WTC11 (cell line): ENCODE measurements at regions of chr1 and their contacts with region 1.

Region 1: DNA sequence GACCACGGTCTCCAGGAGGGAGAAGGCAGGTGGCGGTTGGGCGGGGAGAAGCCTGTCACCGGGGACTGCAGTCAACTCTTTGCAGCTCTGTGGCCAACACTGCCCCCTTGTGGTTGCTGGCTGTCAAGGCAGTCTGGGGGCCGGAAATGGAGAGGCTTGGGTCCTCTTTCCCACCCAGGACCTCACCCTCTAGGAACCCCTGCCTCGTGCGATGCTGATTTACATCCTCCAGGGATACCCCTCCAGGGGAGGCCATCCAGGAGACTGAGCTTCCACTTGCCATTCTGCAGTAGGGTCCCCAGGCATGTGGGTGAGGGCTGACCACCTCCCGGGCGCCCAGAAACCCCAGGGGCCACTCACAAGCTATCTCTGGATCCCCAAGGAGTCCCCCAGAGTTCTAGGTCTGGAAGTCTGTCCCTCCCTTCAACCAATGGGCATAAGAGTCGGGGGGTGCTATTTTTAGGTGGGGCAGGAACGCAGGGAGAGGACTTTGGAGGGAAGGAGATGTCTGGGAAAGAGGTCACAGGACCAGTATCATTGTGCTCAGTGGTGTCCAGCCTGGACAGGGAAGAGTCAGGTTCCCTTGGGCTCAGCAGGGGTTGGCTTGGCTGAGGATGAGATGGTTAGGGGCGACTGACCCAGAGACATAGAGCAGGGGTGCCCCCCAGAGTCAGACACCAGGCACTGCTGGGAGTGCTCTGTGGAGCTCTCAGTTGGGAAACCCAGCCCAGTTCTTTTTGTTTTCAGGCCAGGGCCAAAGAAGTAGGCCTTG is 7.1 kb upstream of the GPR61 start:
- DNase-seq: peak; percentile 96
- ATAC-seq: peak; percentile 91
- H3K4me3 Mint-ChIP-seq: peak overlapping the region; percentile 38; the same call in 1 of the 2 replicates
- H3K27ac Mint-ChIP-seq: peak overlapping the region; percentile 8; the same call in 1 of the 2 replicates
- H3K4me1 Mint-ChIP-seq: peaks cover 10% of the 10 kb centered on the region
- H3K27me3 Mint-ChIP-seq: peaks cover 8% of the 10 kb centered on the region
- CTCF ChIP-seq: peak; percentile 97

Region 2: GRCh38 chr1:109248797-109249642 is 283.5 kb before region 1 on chr1 and contains the start of gene CELSR2:
- CTCF ChIA-PET with region 1: interaction called, 11 read pairs
- POLR2A ChIA-PET with region 1: no interaction called
- DNase-seq: peak; percentile 88
- ATAC-seq: peak; percentile 84
- H3K4me3 Mint-ChIP-seq: peak within 1 kb of the TSS; percentile 63
- H3K27ac Mint-ChIP-seq: no peak within 1 kb of the TSS
- H3K4me1 Mint-ChIP-seq: peaks cover 24% of the 10 kb centered on the region
- H3K27me3 Mint-ChIP-seq: peaks cover 36% of the 10 kb centered on the region
- CTCF ChIP-seq: no peak
- total RNA-seq, gene CELSR2: 26.8 to 31.3 TPM (median 28.2 TPM) in 3 replicates

Region 3: GRCh38 chr1:109282952-109283747 is 249.4 kb before region 1 on chr1 and contains the start of gene PSRC1:
- CTCF ChIA-PET with region 1: interaction called, 18 read pairs
- POLR2A ChIA-PET with region 1: no interaction called
- DNase-seq: peak; percentile 96
- ATAC-seq: peak; percentile 92
- H3K4me3 Mint-ChIP-seq: peak within 1 kb of the TSS; percentile 99
- H3K27ac Mint-ChIP-seq: peak within 1 kb of the TSS; percentile 97
- H3K4me1 Mint-ChIP-seq: peaks cover 42% of the 10 kb centered on the region
- H3K27me3 Mint-ChIP-seq: no peaks in the 10 kb centered on the region; the same call in 1 of the 2 replicates
- CTCF ChIP-seq: no peak
- total RNA-seq, gene PSRC1: 56.9 to 68.4 TPM (median 64.1 TPM) in 3 replicates

Region 4: GRCh38 chr1:109388884-109389637 is 143.5 kb before region 1 on chr1:
- CTCF ChIA-PET with region 1: no interaction called
- POLR2A ChIA-PET with region 1: no interaction called
- DNase-seq: no peak
- ATAC-seq: no peak
- H3K4me3 Mint-ChIP-seq: no peak overlapping the region
- H3K27ac Mint-ChIP-seq: no peak overlapping the region
- H3K4me1 Mint-ChIP-seq: peaks cover 32% of the 10 kb centered on the region
- H3K27me3 Mint-ChIP-seq: no peaks in the 10 kb centered on the region
- CTCF ChIP-seq: no peak

Region 5: DNA sequence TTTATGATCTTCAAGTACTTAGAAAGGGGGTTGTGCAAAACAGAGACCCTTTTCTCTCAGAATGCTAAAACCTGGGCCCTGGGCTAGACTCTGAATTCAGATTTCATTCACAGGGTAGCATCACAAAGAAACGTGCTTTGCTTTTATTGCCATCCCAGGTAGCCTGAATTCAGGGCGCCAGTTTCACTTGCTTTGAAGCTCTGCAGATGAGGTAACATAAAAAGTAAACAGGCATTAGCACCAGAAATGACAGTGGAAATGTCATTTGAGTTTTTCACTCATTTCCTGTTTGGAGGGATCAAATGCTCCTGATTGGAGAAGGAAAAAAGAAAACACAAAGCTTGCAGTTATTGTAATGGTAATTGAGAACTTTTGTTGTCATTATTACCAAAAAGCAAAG is 63.6 kb before region 1 on chr1:
- CTCF ChIA-PET with region 1: interaction called, 10 read pairs
- POLR2A ChIA-PET with region 1: no interaction called
- DNase-seq: no peak
- ATAC-seq: no peak
- H3K4me3 Mint-ChIP-seq: no peak overlapping the region
- H3K27ac Mint-ChIP-seq: no peak overlapping the region
- H3K4me1 Mint-ChIP-seq: peaks cover 25% of the 10 kb centered on the region
- H3K27me3 Mint-ChIP-seq: peaks cover 57% of the 10 kb centered on the region
- CTCF ChIP-seq: no peak

Region 6: DNA sequence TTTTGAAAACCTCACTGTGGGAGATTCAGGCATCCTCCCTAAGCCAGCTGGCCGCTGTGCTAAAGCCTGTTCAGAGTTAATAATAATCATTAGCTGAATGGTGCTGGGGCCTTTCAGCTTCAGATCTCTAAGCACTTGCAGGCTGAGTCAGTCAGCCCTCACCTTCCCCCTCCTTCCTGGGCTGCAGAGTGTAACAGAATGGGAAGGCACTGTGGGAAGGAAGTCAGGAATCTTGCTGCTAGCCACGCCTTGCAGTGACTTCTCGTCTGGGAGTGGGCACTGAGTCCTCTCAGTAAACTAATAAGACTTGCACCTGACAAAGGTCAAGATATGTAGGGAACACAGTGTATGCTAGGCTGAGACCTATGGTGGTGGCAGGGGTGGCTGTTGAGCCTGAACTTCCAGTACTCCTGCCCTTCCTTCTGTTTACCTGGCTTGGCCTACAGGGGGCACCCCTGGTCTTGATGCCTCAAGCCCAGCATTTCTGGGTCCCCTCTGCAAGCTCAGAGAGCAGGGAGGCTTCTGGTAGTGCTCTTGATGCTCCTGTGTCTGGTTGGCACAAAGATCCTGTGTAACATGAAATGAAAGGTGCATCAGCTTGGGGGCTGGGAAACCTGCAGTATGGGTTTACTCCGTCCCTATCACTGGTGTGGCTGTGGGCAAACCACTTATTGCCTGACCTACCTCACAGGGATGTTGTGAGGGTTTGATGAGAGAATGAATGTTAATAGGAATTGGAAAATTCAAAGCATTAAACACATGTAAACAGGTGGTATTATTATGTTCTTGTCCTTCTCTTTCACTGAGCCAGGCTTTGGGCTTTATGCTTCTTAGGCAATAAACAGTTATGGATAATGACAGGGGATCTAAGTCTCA is 32.7 kb before region 1 on chr1:
- CTCF ChIA-PET with region 1: interaction called, 740 read pairs
- POLR2A ChIA-PET with region 1: interaction called, 3 read pairs
- DNase-seq: peak; percentile 89
- ATAC-seq: peak; percentile 77
- H3K4me3 Mint-ChIP-seq: no peak overlapping the region
- H3K27ac Mint-ChIP-seq: 0 out of 2 replicates have a peak overlapping the region, but pooled peaks have one; percentile 23
- H3K4me1 Mint-ChIP-seq: peaks cover 28% of the 10 kb centered on the region
- H3K27me3 Mint-ChIP-seq: no peaks in the 10 kb centered on the region
- CTCF ChIP-seq: peak; percentile 40; the same call in 1 of the 2 replicates

Region 7: DNA sequence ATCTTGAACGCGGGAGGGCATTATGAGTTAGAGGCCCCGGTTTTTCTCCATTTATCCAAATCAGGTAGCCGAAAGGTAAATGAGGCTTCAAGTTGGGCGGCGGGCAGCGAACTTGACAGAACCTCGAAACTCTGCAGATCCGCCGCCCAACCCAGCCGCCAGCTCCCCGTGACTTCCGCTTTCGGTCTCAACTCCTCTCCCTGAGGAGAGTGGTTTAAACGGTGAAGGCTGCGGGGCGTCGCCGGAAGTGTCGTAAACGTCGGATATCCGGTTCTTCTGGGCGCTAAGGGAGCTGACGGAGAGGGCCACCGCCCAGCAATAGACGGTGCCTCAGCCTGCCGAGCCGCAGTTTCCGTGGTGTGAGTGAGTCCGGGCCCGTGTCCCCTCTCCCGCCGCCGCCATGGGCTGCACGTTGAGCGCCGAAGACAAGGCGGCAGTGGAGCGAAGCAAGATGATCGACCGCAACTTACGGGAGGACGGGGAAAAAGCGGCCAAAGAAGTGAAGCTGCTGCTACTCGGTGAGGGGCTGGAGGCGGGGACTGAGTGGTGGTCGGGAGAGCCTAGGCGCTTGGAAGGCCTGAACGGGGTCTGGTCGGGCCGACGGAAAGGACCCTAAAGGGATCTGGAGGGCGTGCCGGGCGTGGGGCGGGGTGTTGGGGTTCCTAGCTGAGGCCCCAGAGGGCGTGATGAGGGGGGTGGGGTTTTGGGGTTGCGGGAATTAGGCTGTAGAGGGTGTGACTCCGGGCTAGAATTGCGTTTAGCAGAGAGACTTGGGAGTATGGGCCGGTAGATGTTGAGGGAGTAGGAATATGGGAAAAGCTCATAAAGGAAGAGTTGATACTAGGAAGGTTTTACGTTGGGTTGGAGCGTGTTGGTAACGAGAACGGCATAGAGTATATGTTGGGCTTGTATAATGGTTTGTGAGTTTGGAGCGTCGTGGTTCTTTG is 16.0 kb after region 1 on chr1 and contains the start of gene GNAI3:
- CTCF ChIA-PET with region 1: interaction called, 60 read pairs
- POLR2A ChIA-PET with region 1: interaction called, 5 read pairs
- DNase-seq: peak; percentile 94
- ATAC-seq: peak; percentile 88
- H3K4me3 Mint-ChIP-seq: peak within 1 kb of the TSS; percentile 85
- H3K27ac Mint-ChIP-seq: peak within 1 kb of the TSS; percentile 94
- H3K4me1 Mint-ChIP-seq: peaks cover 25% of the 10 kb centered on the region
- H3K27me3 Mint-ChIP-seq: no peaks in the 10 kb centered on the region; the same call in 1 of the 2 replicates
- CTCF ChIP-seq: no peak
- total RNA-seq, gene GNAI3: 7.1 to 7.2 TPM (median 7.1 TPM) in 3 replicates